A673 (cell line): ENCODE measurements at regions of chr2 and their contacts with region 1.

Region 1: DNA sequence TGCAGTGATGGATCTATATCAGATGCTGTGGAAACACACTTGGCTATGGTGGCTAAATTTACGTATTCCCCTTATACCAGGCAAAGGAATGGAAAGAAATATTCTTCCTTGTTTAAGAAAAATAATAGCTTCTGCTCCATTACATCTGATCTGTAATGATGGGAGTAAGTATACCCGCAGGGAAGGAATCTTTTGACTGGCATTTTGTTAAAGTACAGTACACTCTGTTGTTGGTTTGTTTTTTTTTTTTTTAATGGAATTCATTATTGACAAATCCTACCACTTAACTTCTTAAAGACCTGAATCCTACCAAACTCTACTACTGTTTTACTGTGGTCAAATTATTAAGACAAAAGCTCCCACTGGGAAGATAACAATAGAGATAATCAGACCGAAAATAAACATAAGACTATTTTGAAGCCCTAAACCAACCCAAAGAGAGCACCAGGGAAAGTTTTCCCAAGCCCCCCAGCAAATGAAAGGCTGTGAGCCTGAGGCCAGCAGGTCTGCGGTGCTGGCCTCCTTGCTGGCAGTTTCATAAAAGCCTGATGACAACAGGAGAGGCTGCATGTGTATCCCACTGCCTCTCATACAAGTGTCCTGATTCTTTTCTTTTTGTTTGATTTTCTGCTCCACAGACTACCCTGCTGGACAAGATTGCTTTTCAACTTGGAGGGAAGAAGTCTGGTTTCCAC is 101.0 kb downstream of the SLC25A12 start:
- DNase-seq: no peak
- H3K4me3 ChIP-seq: no peak overlapping the region
- H3K27ac ChIP-seq: no peak overlapping the region
- H3K4me1 ChIP-seq: peaks cover 41% of the 10 kb centered on the region
- H3K27me3 ChIP-seq: no peaks in the 10 kb centered on the region
- CTCF ChIP-seq: no peak

Region 2: DNA sequence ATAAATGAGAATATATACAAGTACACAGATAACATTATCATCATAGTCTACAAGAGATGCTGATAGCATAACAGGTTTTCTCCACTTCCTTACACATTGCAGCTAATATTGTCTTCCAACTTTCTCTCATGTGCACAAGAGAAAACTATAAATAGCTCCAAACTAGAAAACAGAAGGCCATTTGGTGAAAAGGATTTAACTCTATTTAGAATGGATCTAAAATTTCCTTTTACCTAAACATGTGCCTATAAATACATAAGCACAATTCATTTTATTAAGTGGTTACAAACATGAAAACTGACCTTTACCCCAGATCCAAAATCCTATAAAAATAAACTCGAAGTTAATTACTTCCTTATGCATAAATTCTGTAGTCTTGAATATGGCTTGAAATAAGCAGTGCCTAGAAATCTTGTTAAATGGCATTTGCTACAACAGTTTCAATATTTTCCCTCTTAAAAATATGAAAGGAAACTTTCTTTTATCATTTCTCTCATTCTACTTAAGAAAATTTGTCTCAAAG is 59.4 kb after region 1 on chr2:
- CTCF ChIA-PET with region 1: no interaction called
- POLR2A ChIA-PET with region 1: interaction called, 11 read pairs
- intact Hi-C with region 1: no loop called
- DNase-seq: no peak
- H3K4me3 ChIP-seq: no peak overlapping the region
- H3K27ac ChIP-seq: no peak overlapping the region
- H3K4me1 ChIP-seq: no peaks in the 10 kb centered on the region
- H3K27me3 ChIP-seq: no peaks in the 10 kb centered on the region
- CTCF ChIP-seq: no peak